PC-9 (cell line): ENCODE measurements at regions of chr6 and their contacts with region 1.

Region 1: GRCh38 chr6:27838058-27838944 is 73.9 kb downstream of the OR2B2 start:
- DNase-seq: peak; percentile 71 to 85
- H3K4me3 ChIP-seq: peak overlapping the region; percentile 58
- H3K27ac ChIP-seq: peak overlapping the region; percentile 87
- H3K4me1 ChIP-seq: no peaks in the 10 kb centered on the region
- H3K27me3 ChIP-seq: no peaks in the 10 kb centered on the region
- CTCF ChIP-seq: no peak

Region 2: GRCh38 chr6:27871924-27872638 is 33.8 kb after region 1 on chr6:
- CTCF ChIA-PET with region 1: interaction called, 4 read pairs
- POLR2A ChIA-PET with region 1: interaction called, 47 read pairs
- intact Hi-C with region 1: no loop called
- DNase-seq: peak; percentile 83 to 85
- H3K4me3 ChIP-seq: peak overlapping the region; percentile 67
- H3K27ac ChIP-seq: peak overlapping the region; percentile 70
- H3K4me1 ChIP-seq: peaks cover 7% of the 10 kb centered on the region; the same call in 1 of the 2 replicates
- H3K27me3 ChIP-seq: no peaks in the 10 kb centered on the region
- CTCF ChIP-seq: peak; percentile 36; the same call in 1 of the 2 replicates

Region 3: DNA sequence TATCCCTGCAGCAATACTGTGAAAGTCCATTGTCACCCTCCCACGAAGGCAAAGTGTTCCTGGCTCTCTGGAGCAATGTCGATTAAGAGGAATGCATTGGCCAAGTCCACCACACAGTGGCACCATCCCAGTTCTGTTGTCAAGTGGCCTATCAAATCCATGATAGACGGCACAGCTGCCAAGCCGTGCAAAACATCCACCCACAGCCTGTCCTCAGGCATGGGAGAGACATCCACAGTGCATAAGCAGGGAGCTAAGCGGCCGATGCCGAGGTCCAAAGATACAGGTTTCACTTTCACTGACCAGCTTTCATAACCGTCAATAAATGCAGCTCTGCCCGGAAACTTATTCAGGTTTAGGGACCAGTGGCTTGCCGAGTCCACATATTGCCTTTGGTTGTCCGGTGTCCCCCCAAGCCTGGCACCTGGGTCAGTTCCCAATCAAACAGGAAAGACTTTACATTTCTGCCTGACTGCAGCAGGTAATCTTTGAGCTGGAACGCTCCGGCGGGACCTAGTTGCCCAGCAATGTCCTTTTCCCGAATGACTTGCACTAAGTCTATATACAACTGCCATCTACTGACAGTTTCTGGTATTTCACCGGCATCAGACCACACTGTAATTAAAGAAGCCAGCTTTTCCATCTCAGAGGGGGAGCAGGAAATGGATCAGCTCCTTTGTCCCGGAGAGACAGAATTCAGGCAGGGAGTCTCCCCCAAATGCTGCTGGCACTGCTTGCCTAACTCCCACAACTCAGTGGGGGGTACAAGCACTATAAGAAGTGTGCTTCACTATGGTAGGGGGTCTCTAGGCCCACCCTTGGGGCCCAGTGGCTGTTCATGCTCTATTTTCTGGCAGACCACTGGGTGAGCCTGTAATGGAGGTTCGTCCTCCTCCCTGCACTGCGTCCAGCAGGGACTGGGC is 517.7 kb after region 1 on chr6:
- CTCF ChIA-PET with region 1: no interaction called
- POLR2A ChIA-PET with region 1: no interaction called
- intact Hi-C with region 1: no loop called
- DNase-seq: peak; percentile 75 to 80
- H3K4me3 ChIP-seq: peak overlapping the region; percentile 70
- H3K27ac ChIP-seq: peak overlapping the region; percentile 55
- H3K4me1 ChIP-seq: peaks cover 28% of the 10 kb centered on the region
- H3K27me3 ChIP-seq: no peaks in the 10 kb centered on the region
- CTCF ChIP-seq: peak; percentile 86